Tibial artery (tissue), 4 donors: ENCODE measurements at regions of chr1 and their contacts with region 1.

Region 1: GRCh38 chr1:41662061-41662764 is 177.7 kb upstream of the EDN2 start:
- DNase-seq: peak; percentile 69 to 84
- H3K4me3 ChIP-seq: peak overlapping the region; percentile 67 to 69
- H3K27ac ChIP-seq: peak overlapping the region; percentile 87 to 91
- H3K4me1 ChIP-seq: peaks cover 0 to 51% (median 33%) of the 10 kb centered on the region in 4 donors
- H3K27me3 ChIP-seq: no peaks in the 10 kb centered on the region
- CTCF ChIP-seq: no peak

Region 2: GRCh38 chr1:40462956-40463590 is 1199.1 kb before region 1 on chr1:
- intact Hi-C with region 1: no loop called
- DNase-seq: no peak
- H3K4me3 ChIP-seq: no peak overlapping the region
- H3K27ac ChIP-seq: no peak overlapping the region
- H3K4me1 ChIP-seq: no peaks in the 10 kb centered on the region
- H3K27me3 ChIP-seq: no peaks in the 10 kb centered on the region
- CTCF ChIP-seq: no peak

Region 3: GRCh38 chr1:40799351-40799867 is 862.8 kb before region 1 on chr1:
- intact Hi-C with region 1: loop called (anchors 10 kb)
- DNase-seq: peak in 1 of 2 donors; percentile 77
- H3K4me3 ChIP-seq: no peak overlapping the region
- H3K27ac ChIP-seq: peak overlapping the region; percentile 65 to 67
- H3K4me1 ChIP-seq: peaks cover 9 to 90% (median 73%) of the 10 kb centered on the region in 4 donors
- H3K27me3 ChIP-seq: no peaks in the 10 kb centered on the region
- CTCF ChIP-seq: no peak

Region 4: DNA sequence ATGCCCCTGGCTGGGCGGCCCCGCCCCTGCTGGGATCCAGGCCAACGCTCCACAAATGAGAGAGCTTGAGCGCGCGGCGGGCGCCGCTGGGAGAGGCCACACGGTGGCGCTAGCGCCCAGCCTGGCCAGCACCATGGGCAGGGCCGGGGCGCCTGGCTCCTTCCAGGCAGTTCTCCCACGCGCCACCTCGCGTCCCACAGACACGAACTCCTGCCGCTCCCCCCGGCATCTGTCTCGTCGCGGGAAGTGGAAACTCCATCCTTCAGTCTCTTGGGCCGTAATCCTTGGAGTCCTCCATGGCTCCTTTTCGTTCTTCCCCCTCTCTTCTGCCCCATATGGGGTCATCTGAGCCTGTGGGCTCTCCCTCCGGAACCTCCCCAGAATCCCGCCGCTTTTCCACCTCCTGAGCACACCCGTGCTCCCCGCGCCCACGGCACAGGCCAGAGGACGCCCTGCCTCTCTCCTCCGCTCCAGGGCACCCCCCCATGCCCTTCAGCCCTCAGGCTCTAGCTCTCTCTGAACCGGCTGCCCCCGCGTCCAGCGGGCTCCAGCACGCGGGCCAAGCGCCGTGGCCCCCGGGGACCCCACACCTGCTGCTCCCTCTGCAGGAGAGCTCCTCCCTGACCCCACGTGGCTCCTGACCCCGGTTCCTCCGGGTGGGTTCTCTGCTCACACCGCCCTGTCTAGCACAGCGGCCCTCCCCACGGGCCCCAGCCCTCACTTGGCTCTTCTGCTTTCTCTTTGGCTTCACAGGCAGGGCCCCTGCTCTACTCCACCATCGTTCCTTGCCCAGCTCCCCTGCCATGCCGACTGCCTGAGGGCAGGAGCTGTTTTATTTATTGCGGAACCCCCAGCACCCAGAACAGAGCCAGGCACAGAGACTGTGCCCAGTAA is 145.8 kb before region 1 on chr1:
- intact Hi-C with region 1: loop called (anchors 10 kb)
- DNase-seq: peak; percentile 88 to 95
- H3K4me3 ChIP-seq: peak overlapping the region; percentile 50 to 51
- H3K27ac ChIP-seq: peak overlapping the region; percentile 25 to 69
- H3K4me1 ChIP-seq: peaks cover 6 to 28% (median 18%) of the 10 kb centered on the region in 4 donors
- H3K27me3 ChIP-seq: no peaks in the 10 kb centered on the region
- CTCF ChIP-seq: peak; percentile 91 to 96

Region 5: DNA sequence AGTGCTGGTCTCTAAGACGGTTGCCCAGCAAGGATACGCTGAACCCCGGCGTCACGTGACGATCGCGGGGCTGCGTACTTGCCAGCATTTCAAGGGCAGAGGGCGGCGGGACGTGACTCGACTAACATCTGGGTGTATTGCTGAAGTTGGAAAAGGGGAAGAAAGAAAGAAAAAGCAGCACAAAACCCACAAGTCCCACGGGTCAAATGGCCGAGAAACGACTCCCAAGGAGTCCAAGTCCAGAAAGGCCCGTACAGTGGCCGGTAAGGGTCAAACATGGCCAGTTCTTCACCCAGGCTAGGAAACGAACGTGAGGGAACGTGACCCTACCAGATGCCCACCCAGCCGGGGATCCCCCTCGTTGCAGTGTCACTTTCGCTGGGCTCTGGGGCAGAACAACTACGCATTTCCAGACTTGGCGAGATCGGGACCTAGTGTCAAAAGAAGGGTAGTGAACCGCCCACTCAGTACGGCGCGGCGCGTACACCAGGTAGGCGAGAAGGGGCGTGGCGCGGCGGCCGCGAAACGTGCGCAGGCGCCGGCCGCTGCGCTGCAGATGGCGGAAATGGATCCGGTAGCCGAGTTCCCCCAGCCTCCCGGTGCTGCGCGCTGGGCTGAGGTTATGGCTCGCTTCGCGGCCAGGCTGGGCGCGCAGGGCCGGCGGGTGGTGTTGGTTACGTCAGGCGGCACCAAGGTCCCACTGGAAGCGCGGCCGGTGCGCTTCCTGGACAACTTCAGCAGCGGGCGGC is 794.0 kb after region 1 on chr1 and contains the starts of genes PPCS and ZMYND12:
- intact Hi-C with region 1: loop called (anchors 5 kb)
- DNase-seq: peak; percentile 87 to 92
- H3K4me3 ChIP-seq: peak within 1 kb of the TSS; percentile 79 to 80
- H3K27ac ChIP-seq: peak within 1 kb of the TSS; percentile 88 to 91
- H3K4me1 ChIP-seq: peaks cover 0 to 23% (median 12%) of the 10 kb centered on the region in 4 donors
- H3K27me3 ChIP-seq: no peaks in the 10 kb centered on the region
- CTCF ChIP-seq: peak; percentile 13 to 39